ENCODE measurements at regions of chr11 and their contacts with region 1.

Region 1: GRCh38 chr11:30816959-30817880 is 231.1 kb upstream of the MPPED2 start:
- DNase-seq: no peak
- H3K4me3 ChIP-seq: no peak overlapping the region
- H3K27ac ChIP-seq: no peak overlapping the region
- H3K4me1 ChIP-seq: no peaks in the 10 kb centered on the region
- H3K27me3 ChIP-seq: no peaks in the 10 kb centered on the region
- CTCF ChIP-seq: no peak

Region 2: GRCh38 chr11:30879322-30880005 is 62.2 kb after region 1 on chr11:
- CTCF ChIA-PET with region 1: no interaction called
- POLR2A ChIA-PET with region 1: no interaction called
- intact Hi-C with region 1: loop called (anchors 10 kb)
- DNase-seq: no peak
- H3K4me3 ChIP-seq: no peak overlapping the region
- H3K27ac ChIP-seq: no peak overlapping the region
- H3K4me1 ChIP-seq: no peaks in the 10 kb centered on the region
- H3K27me3 ChIP-seq: no peaks in the 10 kb centered on the region
- CTCF ChIP-seq: no peak

Measured in PC-9 (cell line).